ENCODE measurements at regions of chr11 and their contacts with region 1.

Region 1: DNA sequence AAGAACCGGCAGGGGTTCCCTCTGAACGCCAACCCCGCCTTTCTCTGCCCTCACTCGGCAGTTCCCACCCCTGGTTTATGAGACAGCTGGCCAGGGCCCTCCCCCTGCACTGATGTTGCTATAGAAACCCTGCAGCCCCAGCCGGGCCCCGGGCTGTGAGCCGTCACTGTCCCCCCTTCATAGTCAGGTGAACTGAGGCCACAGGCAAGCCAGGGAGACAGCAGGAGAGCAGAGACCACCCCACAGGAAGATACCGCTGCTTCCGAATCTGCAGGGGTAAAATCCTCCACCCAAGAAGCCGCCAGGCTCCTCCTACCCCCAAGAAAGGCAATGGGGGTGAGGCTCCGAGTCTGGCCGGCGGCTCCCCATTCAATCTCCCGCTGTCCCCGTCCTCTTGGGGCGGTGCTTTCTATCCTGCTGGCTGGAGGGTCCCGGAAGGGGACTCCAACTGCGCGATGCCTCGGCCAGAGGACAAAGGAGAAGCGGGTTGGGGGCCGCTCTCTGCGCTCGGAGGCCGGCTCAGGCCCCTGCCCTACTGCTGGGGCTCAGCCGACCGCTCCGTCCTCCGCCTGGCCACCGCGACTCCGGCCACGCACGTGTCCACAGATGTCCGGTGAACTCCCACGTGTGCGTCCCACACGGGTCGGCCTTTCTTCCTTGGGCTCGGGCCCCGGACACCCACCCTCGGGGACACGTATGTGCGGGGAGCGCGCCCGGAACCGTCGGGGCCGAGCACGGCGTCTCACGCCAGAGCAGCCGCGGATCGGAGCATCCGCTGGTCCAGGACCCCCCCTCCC is 587 bp downstream of the SLC25A22 start:
- DNase-seq: peak; percentile 85
- CTCF ChIP-seq: no peak

Region 2: DNA sequence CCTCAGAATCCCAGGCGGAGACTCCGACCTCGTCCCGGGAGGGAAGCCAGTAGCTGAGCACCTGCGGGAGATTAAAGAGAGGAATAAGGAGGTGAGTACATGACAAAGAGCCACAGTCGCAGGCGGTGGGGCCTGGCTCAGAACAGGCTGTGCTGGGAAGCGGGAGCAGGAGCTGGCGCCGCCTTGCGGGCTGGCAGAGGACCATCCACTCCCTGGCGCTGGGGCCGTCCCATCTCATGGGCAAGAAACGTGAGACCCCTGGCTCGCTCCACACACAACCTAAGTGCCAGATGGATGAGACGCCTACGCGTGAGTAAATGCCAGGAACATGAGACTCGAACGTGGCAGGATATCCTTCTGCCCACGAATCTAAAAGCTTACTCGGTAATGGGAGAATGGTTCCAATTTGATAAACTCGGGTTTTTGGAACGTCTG is 13.9 kb before region 1 on chr11:
- CTCF ChIA-PET with region 1: interaction called, 12 read pairs
- POLR2A ChIA-PET with region 1: no interaction called
- DNase-seq: no peak
- CTCF ChIP-seq: peak; percentile 35

Region 3: GRCh38 chr11:809287-810039 is 12.0 kb after region 1 on chr11 and contains the start of gene RPLP2:
- CTCF ChIA-PET with region 1: interaction called, 10 read pairs
- POLR2A ChIA-PET with region 1: interaction called, 3 read pairs
- DNase-seq: peak; percentile 97
- CTCF ChIP-seq: no peak